Sciatic nerve (tissue), 2 donors: ENCODE measurements at regions of chr1 and their contacts with region 1.

Region 1: GRCh38 chr1:179077396-179077795 is 4.5 kb upstream of the TOR3A start:
- DNase-seq: no peak
- ATAC-seq: no peak

Region 2: DNA sequence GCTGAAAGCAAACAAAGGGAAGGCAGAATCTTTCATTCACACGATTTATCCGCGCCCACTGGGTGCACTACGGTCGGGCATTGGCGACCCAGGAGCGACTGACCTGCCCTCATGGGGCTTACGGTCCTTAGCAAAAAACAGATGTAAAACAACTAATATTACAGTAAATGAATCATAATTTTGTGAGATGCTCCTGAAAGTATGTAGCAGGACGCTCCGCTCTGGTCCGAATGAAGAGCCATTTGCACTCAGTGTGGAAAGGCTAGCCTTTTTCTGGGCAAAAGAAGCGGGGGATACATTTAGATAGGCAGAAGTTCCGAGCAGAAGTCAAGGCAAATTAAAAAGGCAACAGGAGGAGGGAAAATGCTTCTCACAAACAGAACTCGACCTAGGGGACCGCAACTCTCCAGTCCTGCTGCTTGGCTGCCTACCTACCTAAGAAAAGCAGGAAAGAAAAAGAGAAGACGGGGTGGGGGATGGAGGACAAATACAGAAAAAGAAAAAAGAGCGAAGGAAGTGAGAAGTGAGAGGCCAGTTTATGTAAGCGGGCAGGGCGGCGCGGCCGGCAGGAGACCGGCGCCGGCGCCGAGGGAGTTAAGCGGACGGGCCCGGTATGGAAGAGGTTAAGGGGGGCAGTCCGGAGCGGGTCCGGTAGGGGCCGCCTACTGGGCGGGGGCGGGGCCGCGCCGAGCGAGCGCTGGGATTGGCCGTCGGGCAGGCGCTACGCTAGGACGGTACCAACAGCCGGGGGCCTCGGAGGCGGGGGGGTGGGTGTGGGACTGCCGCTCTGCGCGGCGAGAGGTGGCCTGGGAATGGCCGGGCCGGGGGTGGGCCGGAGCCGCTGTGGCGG is 52.0 kb before region 1 on chr1 and contains the start of gene FAM20B:
- intact Hi-C with region 1: no loop called
- DNase-seq: peak; percentile 96
- ATAC-seq: peak; percentile 99
- total RNA-seq, gene FAM20B: 81.2 TPM

Region 3: DNA sequence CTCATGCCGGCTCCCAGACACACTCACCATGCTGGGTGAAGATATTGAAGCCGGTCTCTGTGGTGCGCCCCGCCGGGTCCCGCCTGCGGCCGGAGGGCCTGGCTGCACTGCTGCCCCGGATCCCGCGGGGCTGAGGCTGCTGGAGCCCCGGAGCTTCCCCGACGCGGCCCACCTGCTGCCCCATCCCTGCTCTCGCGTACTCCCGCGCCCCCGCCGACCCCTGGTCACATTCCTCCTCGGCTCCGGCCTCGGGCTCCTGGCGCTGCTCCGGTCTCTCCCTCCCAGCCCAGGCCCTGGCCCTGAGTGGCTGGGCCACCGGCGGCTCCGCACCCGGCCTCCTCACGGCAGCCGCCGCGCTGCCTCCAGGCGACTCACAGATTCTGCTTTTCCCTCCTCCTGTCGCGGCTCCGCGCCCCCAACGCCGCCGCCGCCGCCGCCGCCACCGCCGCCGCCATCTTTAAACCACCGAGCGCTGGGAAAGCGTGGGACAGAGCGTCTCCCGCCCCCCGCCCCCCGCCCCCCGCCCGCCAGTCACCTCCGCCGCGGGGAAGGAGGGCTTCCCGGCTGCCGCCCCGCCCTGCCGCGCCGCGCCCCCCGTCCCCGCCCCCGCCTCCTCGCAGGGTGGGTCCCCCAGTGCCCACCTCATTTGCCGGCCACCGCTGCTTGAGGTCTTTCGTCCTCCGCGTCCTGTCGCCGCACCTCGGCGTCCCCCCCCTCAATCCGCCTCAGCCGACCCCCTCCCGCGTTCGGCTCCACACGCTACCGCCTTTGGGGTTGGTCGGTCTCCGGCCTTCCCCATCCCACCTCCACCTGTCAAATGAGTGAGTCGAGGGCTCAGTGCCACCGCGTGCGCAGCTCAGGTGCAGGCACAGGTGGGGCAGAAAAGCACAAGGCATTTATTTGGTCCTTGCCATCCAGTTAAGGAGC is 152.1 kb after region 1 on chr1 and contains the start of gene ABL2:
- intact Hi-C with region 1: no loop called
- DNase-seq: peak; percentile 70
- ATAC-seq: peak; percentile 59
- total RNA-seq, gene ABL2: 59.4 TPM

Region 4: GRCh38 chr1:179369751-179370341 is 292.4 kb after region 1 on chr1:
- intact Hi-C with region 1: loop called (anchors 2 kb)
- DNase-seq: no peak
- ATAC-seq: peak; percentile 25

Region 5: GRCh38 chr1:180003026-180003695 is 925.8 kb after region 1 on chr1:
- intact Hi-C with region 1: no loop called
- DNase-seq: no peak
- ATAC-seq: no peak